Activated naive CD4-positive, alpha-beta T cell treated with anti-CD3 and anti-CD28 coated beads for 36 hours (primary cell): ENCODE measurements at regions of chr18 and their contacts with region 1.

Region 1: DNA sequence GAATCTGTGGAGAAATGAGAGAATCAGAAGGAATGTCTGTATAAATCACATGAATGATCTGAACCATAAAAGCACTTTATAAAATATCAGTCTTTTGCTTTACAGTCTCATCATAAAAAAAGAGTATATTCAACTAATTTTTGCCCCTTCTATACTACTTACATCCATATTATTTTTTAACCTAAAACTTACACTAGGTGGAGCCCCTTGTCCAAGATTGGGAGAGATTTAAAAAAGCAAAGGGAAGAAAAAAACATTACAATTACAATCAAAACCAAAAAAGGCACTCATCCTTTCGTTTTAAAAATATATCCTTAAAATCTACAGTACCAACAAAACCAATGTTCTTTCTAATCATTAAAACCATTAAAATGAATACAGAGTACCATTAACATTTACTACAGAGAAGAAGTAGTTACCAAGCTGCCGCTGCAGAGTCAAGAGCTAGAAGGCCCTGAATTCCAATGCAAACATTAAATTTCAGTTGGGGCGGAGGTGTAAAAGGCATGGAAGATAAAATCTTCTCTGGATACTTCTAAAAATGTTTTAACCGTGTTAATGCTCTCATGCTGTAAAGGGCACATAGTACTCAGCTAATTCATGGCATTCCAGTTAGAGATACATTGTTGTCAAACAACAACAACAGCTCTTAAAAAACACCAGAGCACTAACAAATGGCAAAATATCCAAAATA is 56.7 kb upstream of the EPB41L3 start:
- DNase-seq: no peak
- H3K4me3 Mint-ChIP-seq: no peak overlapping the region
- H3K27ac Mint-ChIP-seq: no peak overlapping the region
- H3K4me1 Mint-ChIP-seq: no peaks in the 10 kb centered on the region
- H3K27me3 Mint-ChIP-seq: peaks cover 6% of the 10 kb centered on the region

Region 2: GRCh38 chr18:5456577-5457463 is 143.7 kb before region 1 on chr18:
- CTCF ChIA-PET with region 1: no interaction called
- intact Hi-C with region 1: no loop called
- DNase-seq: peak; percentile 9
- H3K4me3 Mint-ChIP-seq: peak overlapping the region; percentile 55
- H3K27ac Mint-ChIP-seq: peak overlapping the region; percentile 83
- H3K4me1 Mint-ChIP-seq: peaks cover 6% of the 10 kb centered on the region
- H3K27me3 Mint-ChIP-seq: no peaks in the 10 kb centered on the region

Region 3: DNA sequence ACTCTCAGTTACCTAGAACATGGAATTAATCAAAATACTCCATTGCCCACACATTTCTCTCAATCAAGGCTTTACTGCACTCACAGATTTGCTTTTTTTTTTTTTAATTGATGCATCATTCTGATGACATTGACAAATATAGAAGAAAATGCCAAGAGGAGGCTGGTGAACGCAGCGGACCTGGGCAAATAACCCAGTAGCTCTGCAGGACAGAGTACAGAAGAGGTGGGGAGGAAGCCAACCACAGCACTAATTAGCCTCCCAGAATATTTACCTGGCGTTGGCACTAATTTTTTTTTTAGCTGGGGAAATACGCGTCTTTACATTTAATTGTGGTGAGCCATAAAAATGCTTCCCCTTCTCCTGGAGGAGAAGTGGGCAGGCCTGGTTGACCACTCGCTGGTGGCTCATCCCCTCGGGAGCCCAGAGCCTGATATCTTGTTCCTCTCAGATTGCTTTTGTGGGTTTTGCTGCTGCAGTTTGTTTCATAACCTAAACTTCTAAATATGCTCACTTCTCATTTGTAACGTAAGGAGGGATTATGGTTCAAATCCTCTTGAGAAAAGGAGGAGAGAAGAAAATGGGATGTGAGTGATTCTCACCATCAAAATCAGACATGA is 109.1 kb after region 1 on chr18:
- CTCF ChIA-PET with region 1: no interaction called
- intact Hi-C with region 1: loop called (anchors 10 kb)
- DNase-seq: no peak
- H3K4me3 Mint-ChIP-seq: no peak overlapping the region
- H3K27ac Mint-ChIP-seq: no peak overlapping the region
- H3K4me1 Mint-ChIP-seq: no peaks in the 10 kb centered on the region
- H3K27me3 Mint-ChIP-seq: peaks cover 10% of the 10 kb centered on the region

Region 4: GRCh38 chr18:5885361-5885760 is 284.8 kb after region 1 on chr18:
- CTCF ChIA-PET with region 1: interaction called, 3 read pairs
- intact Hi-C with region 1: loop called (anchors 5 kb)
- DNase-seq: no peak
- H3K4me3 Mint-ChIP-seq: no peak overlapping the region
- H3K27ac Mint-ChIP-seq: no peak overlapping the region
- H3K4me1 Mint-ChIP-seq: no peaks in the 10 kb centered on the region
- H3K27me3 Mint-ChIP-seq: peaks cover 25% of the 10 kb centered on the region